ENCODE measurements at regions of chr1 and their contacts with region 1.

Region 1: DNA sequence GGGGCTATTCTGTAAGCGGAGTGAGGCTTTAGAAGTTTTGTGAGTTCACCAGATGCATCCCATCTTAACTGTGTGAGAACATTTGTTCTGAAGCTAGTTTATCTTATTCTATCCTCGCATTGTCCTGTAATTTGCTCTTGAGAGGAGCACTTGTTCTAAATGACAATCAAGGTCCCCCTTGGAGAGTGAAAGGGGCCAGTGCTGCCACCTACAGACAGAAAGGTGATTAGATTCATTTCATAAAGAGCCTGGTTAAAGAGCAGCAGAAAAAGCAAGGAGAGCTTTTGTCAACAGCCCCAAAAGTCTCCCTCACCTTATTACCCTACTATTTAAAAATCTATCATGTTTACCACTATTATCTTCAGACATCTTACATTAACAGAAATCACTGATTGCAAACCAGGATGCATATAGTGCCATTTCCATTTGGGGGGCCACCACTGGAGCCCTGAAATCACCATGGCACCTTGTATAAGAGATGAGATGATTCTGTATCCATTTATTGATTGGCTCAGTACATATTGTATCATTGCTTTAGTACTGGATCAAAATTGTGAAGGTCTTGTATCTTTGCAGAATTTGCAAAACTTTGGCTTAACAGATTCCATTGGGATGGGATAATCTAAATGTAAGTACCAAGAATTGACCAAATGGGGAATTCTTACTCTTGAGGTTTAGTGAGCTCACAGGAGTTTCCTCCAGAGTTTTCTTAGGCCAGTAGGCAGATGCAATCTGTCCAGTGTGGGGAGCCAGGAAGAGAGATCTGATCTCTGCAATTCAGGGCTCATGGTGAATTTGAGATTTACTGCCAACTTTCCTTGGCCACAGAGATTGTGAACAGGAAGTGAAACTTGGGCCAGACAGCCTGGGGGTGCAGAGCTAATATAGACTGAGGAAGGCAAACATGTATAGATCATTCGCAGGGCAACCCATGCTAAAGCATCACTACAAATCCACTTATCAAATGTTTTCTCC is 64.3 kb upstream of the TRABD2B start:
- DNase-seq: peak; percentile 47 to 76
- H3K4me3 ChIP-seq: no peak overlapping the region
- H3K27ac ChIP-seq: no peak overlapping the region
- H3K4me1 ChIP-seq: peaks cover 0 to 6% (median 1%) of the 10 kb centered on the region in 4 experiments; a peak in 3 of 7 replicates
- H3K27me3 ChIP-seq: peaks cover 0 to 3% (median 0%) of the 10 kb centered on the region in 4 experiments; a peak in 1 of 7 replicates
- CTCF ChIP-seq: peak in 2 of 3 experiments; percentile 72 to 75; a peak in 3 of 4 replicates
- EP300 ChIP-seq: no peak
- POLR2A ChIP-seq: no peak
- RAD21 ChIP-seq: peak; percentile 76 to 83

Region 2: DNA sequence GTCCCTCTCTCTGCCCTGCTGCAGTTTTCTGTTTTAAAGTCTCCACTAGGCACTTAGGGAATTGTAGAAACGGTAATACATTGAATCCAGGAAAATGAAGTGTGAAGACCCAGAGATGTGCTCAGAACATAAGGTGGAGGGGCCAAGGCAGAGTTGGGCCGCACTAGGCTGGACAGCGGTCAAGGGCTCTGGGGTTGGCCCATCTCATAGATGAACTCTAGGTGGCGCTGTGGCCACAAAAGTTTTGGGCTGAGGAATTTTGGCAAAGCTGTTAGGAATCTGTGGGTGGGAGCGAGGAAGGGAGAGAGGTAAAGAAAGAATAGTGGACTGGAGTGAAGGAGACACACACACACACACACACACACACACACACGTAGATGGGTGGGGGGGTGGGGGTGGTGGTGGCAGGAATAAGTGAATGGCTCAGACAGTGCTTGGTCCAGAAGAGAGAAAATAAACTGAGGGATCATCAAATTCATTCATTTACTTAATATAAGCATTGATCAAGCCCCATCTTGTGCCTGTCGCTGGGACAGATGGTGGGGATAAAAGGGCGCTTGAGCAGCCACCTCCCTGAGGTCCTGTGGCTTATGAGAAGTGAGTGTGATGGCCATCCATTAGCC is 322.8 kb before region 1 on chr1:
- CTCF ChIA-PET with region 1: interaction called, 10 read pairs
- POLR2A ChIA-PET with region 1: interaction called, 3 read pairs
- DNase-seq: peak in 1 of 2 experiments; percentile 86
- H3K4me3 ChIP-seq: no peak overlapping the region
- H3K27ac ChIP-seq: no peak overlapping the region
- H3K4me1 ChIP-seq: no peaks in the 10 kb centered on the region
- H3K27me3 ChIP-seq: peaks cover 0 to 3% (median 1%) of the 10 kb centered on the region in 4 experiments; a peak in 2 of 7 replicates
- CTCF ChIP-seq: peak; percentile 77 to 88 (median 85)
- EP300 ChIP-seq: no peak
- POLR2A ChIP-seq: no peak
- RAD21 ChIP-seq: peak; percentile 85 to 89

Region 3: DNA sequence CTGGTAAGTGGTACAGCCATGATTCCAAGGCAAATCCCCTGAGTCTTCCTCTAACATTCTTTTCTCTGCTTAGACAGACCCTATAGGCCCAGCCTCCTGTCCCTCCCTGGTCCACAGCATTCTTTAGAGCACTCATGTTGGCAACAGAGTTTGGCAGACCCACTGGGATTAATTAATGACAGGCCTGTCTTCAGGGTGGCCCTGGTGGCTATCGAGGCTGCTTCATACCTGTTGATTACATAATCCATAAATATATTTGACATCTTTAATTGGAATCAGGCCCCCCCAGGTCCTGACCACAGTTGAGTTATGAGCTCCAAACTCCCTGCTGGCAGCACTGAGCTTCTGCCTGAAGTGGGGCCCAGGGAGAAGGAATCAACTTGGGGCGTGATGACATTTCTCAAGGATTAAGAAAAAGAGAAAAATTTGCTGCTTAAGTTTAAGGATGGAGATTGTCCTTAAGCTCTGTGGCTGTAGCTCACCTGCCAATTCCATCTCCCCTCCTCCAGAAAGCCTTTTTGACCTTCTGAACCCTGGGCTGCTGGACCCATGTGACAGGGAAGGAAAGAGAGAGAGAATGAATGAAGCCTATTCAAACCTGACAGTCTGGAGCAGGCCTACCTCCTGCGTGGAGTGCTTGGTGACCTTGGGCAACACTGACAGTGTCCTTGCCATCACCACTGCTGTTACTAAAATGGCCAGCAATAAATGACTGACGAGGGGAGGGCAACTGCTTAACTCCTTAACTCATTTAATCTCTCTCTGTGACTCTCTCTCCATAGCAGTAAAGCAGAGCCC is 220.9 kb before region 1 on chr1:
- CTCF ChIA-PET with region 1: no interaction called
- POLR2A ChIA-PET with region 1: no interaction called
- DNase-seq: no peak
- H3K4me3 ChIP-seq: no peak overlapping the region
- H3K27ac ChIP-seq: no peak overlapping the region
- H3K4me1 ChIP-seq: peaks cover 3 to 23% (median 11%) of the 10 kb centered on the region in 4 experiments
- H3K27me3 ChIP-seq: no peaks in the 10 kb centered on the region
- CTCF ChIP-seq: no peak
- EP300 ChIP-seq: no peak
- POLR2A ChIP-seq: no peak
- RAD21 ChIP-seq: no peak

Region 4: DNA sequence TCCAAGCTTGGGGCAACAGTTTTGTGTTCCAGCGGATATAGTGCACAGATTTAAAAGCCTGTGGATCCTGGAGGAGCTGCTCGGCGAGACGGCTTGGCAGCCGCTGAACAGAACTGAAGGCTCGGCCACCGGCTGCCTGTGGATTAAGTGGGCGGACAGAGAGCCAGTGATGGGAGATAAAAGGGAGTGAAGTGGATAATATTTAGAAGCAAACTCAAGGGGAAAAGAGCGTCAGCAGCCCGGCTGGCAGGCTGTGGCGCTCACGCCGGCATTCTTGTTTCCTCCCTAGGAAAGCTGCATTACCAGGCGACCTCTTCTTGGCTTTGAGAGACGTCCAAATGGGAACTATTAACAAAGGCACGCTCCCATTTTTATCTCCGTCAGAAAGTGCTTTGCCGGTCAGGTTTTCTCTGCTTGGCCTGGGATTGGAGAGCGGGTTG is 74.7 kb before region 1 on chr1:
- CTCF ChIA-PET with region 1: interaction called, 15 read pairs
- POLR2A ChIA-PET with region 1: no interaction called
- DNase-seq: no peak
- H3K4me3 ChIP-seq: no peak overlapping the region
- H3K27ac ChIP-seq: no peak overlapping the region
- H3K4me1 ChIP-seq: peaks cover 17 to 32% (median 20%) of the 10 kb centered on the region in 4 experiments
- H3K27me3 ChIP-seq: peaks cover 0 to 14% (median 9%) of the 10 kb centered on the region in 4 experiments; a peak in 5 of 7 replicates
- CTCF ChIP-seq: no peak
- EP300 ChIP-seq: no peak
- POLR2A ChIP-seq: no peak
- RAD21 ChIP-seq: no peak

Region 5: GRCh38 chr1:48019714-48020315 is 41.6 kb before region 1 on chr1:
- CTCF ChIA-PET with region 1: interaction called, 27 read pairs
- POLR2A ChIA-PET with region 1: no interaction called
- DNase-seq: no peak
- H3K4me3 ChIP-seq: no peak overlapping the region
- H3K27ac ChIP-seq: no peak overlapping the region
- H3K4me1 ChIP-seq: peaks cover 0 to 2% (median 0%) of the 10 kb centered on the region in 4 experiments; a peak in 1 of 7 replicates
- H3K27me3 ChIP-seq: no peaks in the 10 kb centered on the region; a peak in 1 of 7 replicates
- CTCF ChIP-seq: no peak
- EP300 ChIP-seq: no peak
- POLR2A ChIP-seq: no peak
- RAD21 ChIP-seq: no peak

Region 6: GRCh38 chr1:48039088-48040054 is 22.1 kb before region 1 on chr1:
- CTCF ChIA-PET with region 1: interaction called, 119 read pairs
- POLR2A ChIA-PET with region 1: interaction called, 3 read pairs
- DNase-seq: no peak
- H3K4me3 ChIP-seq: no peak overlapping the region
- H3K27ac ChIP-seq: no peak overlapping the region
- H3K4me1 ChIP-seq: peaks cover 6 to 14% (median 11%) of the 10 kb centered on the region in 4 experiments
- H3K27me3 ChIP-seq: no peaks in the 10 kb centered on the region
- CTCF ChIP-seq: no peak
- EP300 ChIP-seq: no peak
- POLR2A ChIP-seq: no peak
- RAD21 ChIP-seq: no peak

Region 7: DNA sequence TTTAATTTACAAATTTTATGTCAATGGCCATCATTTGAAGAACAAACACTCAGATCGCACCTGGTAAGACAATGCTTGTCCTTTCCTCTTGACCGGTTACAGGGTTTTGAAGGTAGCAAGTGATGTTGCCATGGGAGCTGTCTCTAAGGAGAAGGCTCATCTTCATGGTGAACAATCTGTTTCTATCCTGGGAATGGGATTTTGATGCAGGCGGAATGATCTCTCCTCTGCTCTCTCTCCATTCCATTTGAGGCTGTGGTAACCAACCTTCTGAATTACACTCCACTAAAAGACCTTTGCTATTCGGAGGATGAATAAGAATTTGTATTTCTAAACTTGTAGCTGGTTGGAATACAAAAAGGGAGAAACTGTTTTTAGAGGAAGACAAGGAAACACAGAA is 103.1 kb after region 1 on chr1:
- CTCF ChIA-PET with region 1: no interaction called
- POLR2A ChIA-PET with region 1: no interaction called
- DNase-seq: no peak
- H3K4me3 ChIP-seq: no peak overlapping the region
- H3K27ac ChIP-seq: no peak overlapping the region
- H3K4me1 ChIP-seq: no peaks in the 10 kb centered on the region; a peak in 1 of 7 replicates
- H3K27me3 ChIP-seq: no peaks in the 10 kb centered on the region
- CTCF ChIP-seq: no peak
- EP300 ChIP-seq: no peak
- POLR2A ChIP-seq: no peak
- RAD21 ChIP-seq: no peak

Region 8: GRCh38 chr1:48202030-48202752 is 140.7 kb after region 1 on chr1:
- CTCF ChIA-PET with region 1: interaction called, 12 read pairs
- POLR2A ChIA-PET with region 1: no interaction called
- DNase-seq: peak in 1 of 2 experiments; percentile 84
- H3K4me3 ChIP-seq: no peak overlapping the region
- H3K27ac ChIP-seq: no peak overlapping the region
- H3K4me1 ChIP-seq: peaks cover 0 to 2% (median 0%) of the 10 kb centered on the region in 4 experiments; a peak in 1 of 7 replicates
- H3K27me3 ChIP-seq: no peaks in the 10 kb centered on the region; a peak in 1 of 7 replicates
- CTCF ChIP-seq: peak; percentile 53 to 84 (median 82)
- EP300 ChIP-seq: no peak
- POLR2A ChIP-seq: no peak
- RAD21 ChIP-seq: peak; percentile 85 to 89

Measured in H1 (cell line).